Mammary epithelial cell (primary cell): ENCODE measurements at regions of chr21 and their contacts with region 1.

Region 1: DNA sequence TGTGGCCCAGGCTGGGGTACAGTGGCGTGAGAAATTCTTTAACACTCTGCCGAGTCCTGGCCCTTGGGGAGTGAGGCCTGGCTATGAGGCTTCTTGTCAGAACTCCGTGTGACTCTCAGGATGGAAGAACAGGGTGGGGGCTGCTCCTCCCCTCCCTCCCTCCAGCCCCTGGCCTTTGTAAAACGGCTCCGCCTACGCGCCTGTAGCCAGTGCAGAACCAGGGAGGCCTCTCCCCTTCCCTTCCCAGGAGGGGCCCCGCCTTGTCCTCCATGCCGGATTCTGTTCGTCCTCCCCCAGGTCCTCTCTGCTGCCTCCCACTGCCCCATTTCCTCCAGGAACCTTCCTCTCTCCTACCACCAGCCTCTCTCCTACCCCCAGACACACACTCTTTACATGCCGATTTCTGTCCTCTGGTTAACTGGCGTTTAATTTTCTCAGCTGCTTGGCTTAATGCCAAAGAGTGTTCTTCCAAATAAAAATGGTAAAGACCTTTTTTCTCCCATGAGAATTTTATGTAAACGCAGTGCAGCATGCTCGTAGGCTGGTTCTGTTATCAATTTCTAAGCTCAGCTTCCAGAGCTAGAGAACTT is 21.0 kb downstream of the PDE9A start:
- DNase-seq: no peak
- H3K4me3 ChIP-seq: no peak overlapping the region
- H3K27ac ChIP-seq: no peak overlapping the region
- H3K4me1 ChIP-seq: peaks cover 5% of the 10 kb centered on the region
- H3K27me3 ChIP-seq: peaks cover 1% of the 10 kb centered on the region
- CTCF ChIP-seq: no peak

Region 2: GRCh38 chr21:42539931-42540343 is 134.5 kb before region 1 on chr21:
- CTCF ChIA-PET with region 1: no interaction called
- dilution Hi-C with region 1: no loop called
- in situ Hi-C with region 1: no loop called
- intact Hi-C with region 1: no loop called
- DNase-seq: no peak
- H3K4me3 ChIP-seq: no peak overlapping the region
- H3K27ac ChIP-seq: no peak overlapping the region
- H3K4me1 ChIP-seq: no peaks in the 10 kb centered on the region
- H3K27me3 ChIP-seq: no peaks in the 10 kb centered on the region
- CTCF ChIP-seq: peak in 1 of 2 donors; percentile 15

Region 3: GRCh38 chr21:42581993-42582786 is 92.3 kb before region 1 on chr21:
- CTCF ChIA-PET with region 1: no interaction called
- dilution Hi-C with region 1: no loop called
- in situ Hi-C with region 1: no loop called
- intact Hi-C with region 1: no loop called
- DNase-seq: no peak
- H3K4me3 ChIP-seq: no peak overlapping the region
- H3K27ac ChIP-seq: no peak overlapping the region
- H3K4me1 ChIP-seq: no peaks in the 10 kb centered on the region
- H3K27me3 ChIP-seq: no peaks in the 10 kb centered on the region
- CTCF ChIP-seq: no peak

Region 4: DNA sequence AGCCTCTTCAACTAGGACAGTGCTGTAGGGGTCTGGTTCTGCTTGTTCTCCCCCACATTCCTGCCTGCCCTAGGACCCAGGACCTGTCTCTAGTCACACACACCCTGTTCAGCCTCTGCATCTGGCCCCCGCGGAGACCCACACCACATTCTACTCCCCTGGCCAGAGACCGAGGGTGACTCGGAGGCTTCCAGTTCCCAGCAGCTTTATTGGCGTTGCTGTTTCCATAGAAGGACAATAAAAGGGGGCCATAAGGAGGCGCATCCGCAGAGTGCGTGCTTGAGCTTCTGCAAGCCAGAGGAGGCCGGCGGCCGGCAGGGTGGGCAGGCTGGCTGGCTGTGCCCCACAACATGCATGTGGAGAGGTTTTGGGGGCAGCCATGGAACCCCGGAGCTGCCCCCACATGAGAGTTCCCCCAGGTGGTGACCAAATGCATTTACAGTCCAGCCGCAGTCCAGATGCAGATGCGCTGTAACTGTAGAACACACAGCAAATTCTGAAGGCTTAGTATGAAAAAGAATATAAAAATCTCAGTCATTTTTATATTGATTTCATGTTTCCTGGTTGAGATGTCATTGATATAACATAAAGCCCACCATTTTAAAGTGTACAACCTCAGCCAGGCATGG is 31.4 kb after region 1 on chr21:
- CTCF ChIA-PET with region 1: no interaction called
- dilution Hi-C with region 1: no loop called
- in situ Hi-C with region 1: no loop called
- intact Hi-C with region 1: no loop called
- DNase-seq: no peak
- H3K4me3 ChIP-seq: no peak overlapping the region
- H3K27ac ChIP-seq: no peak overlapping the region
- H3K4me1 ChIP-seq: no peaks in the 10 kb centered on the region
- H3K27me3 ChIP-seq: no peaks in the 10 kb centered on the region
- CTCF ChIP-seq: no peak

Region 5: DNA sequence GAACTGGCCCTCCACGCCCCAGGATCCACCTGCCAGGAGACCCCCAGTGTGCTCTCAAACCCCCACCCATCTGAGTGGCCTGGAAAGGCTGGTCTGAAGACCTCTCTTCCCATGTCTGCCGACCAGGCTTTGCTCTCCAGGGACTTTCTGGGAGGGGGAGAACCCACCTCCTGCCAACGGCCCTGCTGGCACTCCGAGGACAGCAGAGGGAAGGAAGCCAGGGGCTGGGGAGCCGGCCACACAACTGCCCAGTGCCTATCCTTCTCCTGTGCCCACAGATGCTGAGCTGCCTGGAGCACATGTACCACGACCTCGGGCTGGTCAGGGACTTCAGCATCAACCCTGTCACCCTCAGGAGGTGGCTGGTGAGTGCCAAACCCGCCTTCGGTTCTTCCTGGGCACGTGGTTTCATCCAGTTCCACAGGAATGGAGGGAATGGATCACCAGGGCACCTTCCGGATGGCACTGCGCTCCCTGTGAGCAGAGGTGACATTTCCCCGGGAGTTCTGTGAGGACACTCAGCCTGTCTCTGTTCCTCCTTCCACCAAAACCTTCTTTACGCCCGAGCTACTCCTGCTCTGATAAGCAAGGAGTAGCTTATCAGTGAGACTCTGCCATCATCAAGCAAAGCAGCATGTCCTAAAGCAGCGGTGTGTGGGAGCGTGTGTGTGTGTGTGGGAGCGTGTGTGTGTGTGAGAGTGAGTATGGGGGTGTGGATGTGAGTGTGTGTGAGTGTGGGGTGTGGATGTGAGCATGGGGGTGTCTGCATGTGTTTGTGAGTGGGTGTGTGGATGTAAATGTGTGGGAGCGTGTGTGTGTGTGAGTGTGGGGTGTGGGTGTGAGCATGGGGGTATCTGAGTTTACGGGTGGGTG is 84.5 kb after region 1 on chr21:
- CTCF ChIA-PET with region 1: no interaction called
- dilution Hi-C with region 1: loop called (anchors 5 kb)
- in situ Hi-C with region 1: no loop called
- intact Hi-C with region 1: no loop called
- DNase-seq: no peak
- H3K4me3 ChIP-seq: no peak overlapping the region
- H3K27ac ChIP-seq: no peak overlapping the region
- H3K4me1 ChIP-seq: no peaks in the 10 kb centered on the region
- H3K27me3 ChIP-seq: peaks cover 6% of the 10 kb centered on the region
- CTCF ChIP-seq: no peak